Natural killer cell (primary cell): ENCODE measurements at regions of chr5 and their contacts with region 1.

Region 1: DNA sequence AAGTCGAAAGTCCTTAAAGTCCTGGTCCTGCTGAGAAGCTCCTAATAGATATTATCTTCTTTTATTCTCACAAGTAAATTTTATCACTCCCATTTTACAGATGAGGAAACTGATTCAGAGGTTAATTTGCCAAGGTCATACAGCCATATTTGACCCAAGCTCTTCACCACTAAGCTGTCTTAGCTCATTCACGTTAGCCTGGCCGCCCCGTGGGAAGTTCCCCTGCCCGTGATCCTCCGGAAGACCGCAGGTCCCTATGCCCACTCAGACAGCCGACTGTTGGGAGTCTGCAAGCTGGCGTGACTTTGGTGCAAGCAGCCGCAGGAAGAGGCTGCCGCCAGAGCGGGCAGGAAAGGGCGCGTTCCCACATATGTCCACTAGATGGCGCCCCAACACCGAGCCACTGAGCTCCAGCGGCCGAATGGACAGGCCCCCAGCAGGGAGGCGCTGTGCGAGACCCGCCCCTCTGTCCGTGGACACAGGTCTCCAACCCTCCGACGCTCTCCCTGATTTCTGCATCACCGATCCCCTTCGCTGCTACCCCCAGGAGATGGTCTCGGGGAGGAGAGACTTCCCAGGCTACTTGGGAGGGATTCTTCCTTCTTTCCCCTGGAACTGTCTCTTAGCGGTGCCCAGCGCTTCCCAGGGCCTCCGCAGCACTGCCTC is 10.0 kb upstream of the ARAP3 start:
- DNase-seq: peak; percentile 88 to 89
- ATAC-seq: peak; percentile 95 to 99 (median 99)
- H3K4me3 ChIP-seq: no peak overlapping the region
- H3K4me3 Mint-ChIP-seq: peak overlapping the region; percentile 42
- H3K27ac ChIP-seq: no peak overlapping the region
- H3K27ac Mint-ChIP-seq: peak overlapping the region in 1 of 2 donors; percentile 83
- H3K4me1 ChIP-seq: peaks cover 22% of the 10 kb centered on the region
- H3K4me1 Mint-ChIP-seq: peaks cover 13 to 15% of the 10 kb centered on the region in 2 donors
- H3K27me3 ChIP-seq: no peaks in the 10 kb centered on the region
- H3K27me3 Mint-ChIP-seq: peaks cover 3 to 11% of the 10 kb centered on the region in 2 donors
- CTCF ChIP-seq: peak; percentile 95

Region 2: DNA sequence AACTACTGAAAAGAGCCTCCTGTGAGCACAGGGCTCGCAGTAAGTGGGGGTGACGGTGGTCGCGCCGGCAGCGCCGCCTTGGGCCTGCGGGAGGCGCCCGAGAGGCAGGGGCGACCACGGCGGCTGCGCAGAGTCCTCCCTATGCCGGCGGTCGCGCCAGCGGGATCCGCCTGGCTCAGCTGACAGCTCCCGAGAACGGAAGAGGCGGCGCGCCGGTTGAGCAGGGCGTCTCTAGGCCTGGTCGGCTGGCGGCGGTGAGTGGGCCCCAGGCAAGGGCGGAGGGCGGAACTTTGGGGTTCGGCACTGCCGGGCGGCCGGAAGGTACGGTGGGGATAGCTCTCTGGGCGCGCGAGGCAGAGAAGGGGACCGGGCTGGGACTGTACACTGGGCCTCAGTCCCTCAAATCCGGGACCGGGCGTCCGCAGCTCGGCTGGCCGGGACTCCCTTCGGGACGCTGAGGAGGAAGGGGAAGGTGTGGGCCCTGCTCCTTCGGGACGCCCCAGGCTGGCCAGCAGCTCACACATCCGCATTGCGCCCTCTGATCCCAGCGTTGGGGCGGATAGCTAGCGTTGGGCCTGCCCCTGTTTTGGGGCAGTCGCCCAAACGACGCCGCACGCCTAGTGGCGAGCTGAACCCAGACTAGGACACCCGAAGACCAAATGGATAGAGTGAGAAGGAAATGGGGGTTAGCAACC is 277.1 kb after region 1 on chr5 and contains the start of gene RNF14:
- intact Hi-C with region 1: loop called (anchors 2 kb)
- DNase-seq: peak; percentile 92 to 96
- ATAC-seq: peak; percentile 94 to 97 (median 95)
- H3K4me3 ChIP-seq: peak within 1 kb of the TSS; percentile 97
- H3K4me3 Mint-ChIP-seq: peak within 1 kb of the TSS; percentile 99
- H3K27ac ChIP-seq: peak within 1 kb of the TSS; percentile 98
- H3K27ac Mint-ChIP-seq: peak within 1 kb of the TSS; percentile 96 to 98
- H3K4me1 ChIP-seq: peaks cover 12% of the 10 kb centered on the region
- H3K4me1 Mint-ChIP-seq: peaks cover 27 to 30% of the 10 kb centered on the region in 2 donors
- H3K27me3 ChIP-seq: no peaks in the 10 kb centered on the region
- H3K27me3 Mint-ChIP-seq: no peaks in the 10 kb centered on the region
- CTCF ChIP-seq: peak; percentile 97
- total RNA-seq, gene RNF14: 20.6 to 29.2 (median 21.3) TPM